Endothelial cell of umbilical vein (primary cell): ENCODE measurements at regions of chr10 and their contacts with region 1.

Region 1: GRCh38 chr10:80382989-80383388 is 25.4 kb upstream of the PRXL2A start:
- DNase-seq: peak; percentile 70
- H3K4me3 ChIP-seq: no peak overlapping the region
- H3K27ac ChIP-seq: no peak overlapping the region
- H3K4me1 ChIP-seq: no peaks in the 10 kb centered on the region
- H3K27me3 ChIP-seq: no peaks in the 10 kb centered on the region
- CTCF ChIP-seq: peak; percentile 58 to 63
- POLR2A ChIP-seq: no peak

Region 2: DNA sequence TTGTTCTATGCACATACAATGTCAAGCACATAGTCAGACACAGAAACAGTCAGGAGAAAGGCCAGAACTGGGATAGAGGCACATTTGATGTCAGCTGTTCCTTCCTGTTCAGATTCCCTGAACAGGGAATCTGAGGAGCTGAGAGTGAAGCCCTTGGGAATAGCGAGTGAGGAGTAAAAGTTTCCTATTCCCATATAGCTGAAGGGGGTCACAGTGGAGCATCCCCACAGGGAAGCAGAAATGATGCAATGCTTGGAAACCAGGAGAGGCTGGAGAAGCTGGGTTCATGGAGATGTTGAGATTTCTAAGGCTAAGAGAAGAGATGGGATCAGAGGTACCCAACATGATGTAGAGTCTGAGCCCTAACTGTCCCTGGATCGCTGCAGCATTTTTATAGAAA is 14.0 kb after region 1 on chr10:
- CTCF ChIA-PET with region 1: interaction called, 10 read pairs
- POLR2A ChIA-PET with region 1: no interaction called
- dilution Hi-C with region 1: no loop called
- intact Hi-C with region 1: no loop called
- DNase-seq: no peak
- H3K4me3 ChIP-seq: no peak overlapping the region
- H3K27ac ChIP-seq: no peak overlapping the region
- H3K4me1 ChIP-seq: no peaks in the 10 kb centered on the region
- H3K27me3 ChIP-seq: peaks cover 5 to 7% of the 10 kb centered on the region in 2 experiments
- CTCF ChIP-seq: no peak
- POLR2A ChIP-seq: no peak

Region 3: DNA sequence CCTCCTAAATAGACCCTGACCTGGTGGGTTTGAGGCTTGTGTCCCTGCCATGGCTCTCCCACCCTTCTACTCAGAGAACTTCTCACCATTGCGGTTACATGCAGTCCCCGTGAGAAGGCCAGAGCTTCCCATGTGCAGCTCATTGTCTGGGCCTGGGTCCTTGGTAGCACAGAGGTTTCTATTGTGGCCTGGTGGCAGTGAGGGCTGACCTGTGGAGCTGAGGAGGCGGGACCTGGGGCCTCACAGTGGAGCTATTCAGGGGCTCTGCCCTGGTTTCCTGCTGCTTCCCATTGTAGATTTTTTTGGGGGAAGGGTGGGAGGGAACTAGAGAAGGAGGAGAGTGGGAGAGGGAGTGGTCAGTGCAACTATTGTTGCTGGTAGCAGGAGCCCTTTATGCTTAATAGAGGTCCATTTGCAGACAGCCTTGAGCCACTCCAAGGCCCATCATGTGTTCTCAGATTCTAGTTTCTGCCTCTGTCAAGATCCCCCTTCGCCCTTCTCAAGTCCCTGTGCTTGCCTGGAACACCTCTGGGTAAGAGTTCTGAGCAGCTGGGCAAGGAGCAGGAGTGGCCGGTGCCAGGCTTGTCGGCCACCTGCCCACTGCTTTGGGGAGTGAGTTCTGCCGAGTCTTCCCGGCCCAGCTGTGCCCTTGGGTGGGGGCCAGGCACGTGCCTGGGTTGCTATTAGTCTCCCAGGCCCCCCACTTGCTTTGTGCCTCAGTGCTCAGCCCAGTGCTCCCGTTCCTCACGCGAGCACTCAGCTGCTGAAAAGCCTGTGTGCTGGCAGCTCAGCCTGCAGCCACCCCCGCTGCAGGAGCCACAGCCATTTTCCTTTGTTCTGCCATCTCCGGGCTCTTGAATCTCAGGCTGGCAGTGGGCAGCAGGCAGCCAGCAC is 81.8 kb after region 1 on chr10:
- CTCF ChIA-PET with region 1: no interaction called
- POLR2A ChIA-PET with region 1: no interaction called
- dilution Hi-C with region 1: no loop called
- intact Hi-C with region 1: no loop called
- DNase-seq: peak; percentile 78
- H3K4me3 ChIP-seq: peak overlapping the region in 2 of 3 experiments; percentile 13 to 23
- H3K27ac ChIP-seq: peak overlapping the region; percentile 79
- H3K4me1 ChIP-seq: peaks cover 97% of the 10 kb centered on the region
- H3K27me3 ChIP-seq: no peaks in the 10 kb centered on the region
- CTCF ChIP-seq: no peak
- POLR2A ChIP-seq: peak; percentile 37

Region 4: DNA sequence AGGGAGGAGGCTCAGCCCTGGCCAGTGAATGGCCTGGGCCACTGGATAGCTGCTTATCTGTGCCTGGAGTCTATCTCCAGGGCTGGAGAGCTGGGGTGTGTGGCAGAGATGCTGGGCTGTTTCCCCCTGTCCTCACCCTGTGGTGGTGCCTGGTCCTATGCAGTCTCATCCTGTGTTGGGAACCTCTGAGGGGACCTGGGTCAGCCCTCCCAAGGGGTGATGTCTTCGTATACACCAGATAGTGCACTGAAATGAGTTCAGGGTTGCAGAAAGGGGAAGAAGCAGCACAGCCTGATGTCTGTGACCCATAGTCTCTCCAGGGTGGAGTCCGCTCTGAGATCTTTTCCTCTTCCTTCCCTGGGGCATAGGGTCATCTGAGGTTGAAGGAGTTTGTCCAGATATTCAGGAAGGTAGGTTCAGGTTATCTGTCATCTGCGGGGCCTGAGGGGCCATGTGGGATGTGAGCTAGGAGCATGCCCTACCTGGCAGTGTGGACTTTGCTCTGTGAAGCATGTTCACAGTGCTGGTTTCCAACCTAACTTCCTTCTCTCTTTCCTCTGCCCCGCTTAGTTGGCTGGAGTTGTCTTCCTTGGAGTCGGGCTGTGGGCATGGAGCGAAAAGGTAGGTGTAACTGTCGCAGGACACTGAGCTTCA is 121.3 kb after region 1 on chr10:
- CTCF ChIA-PET with region 1: interaction called, 29 read pairs
- POLR2A ChIA-PET with region 1: interaction called, 3 read pairs
- dilution Hi-C with region 1: no loop called
- intact Hi-C with region 1: loop called (anchors 1 kb)
- DNase-seq: no peak
- H3K4me3 ChIP-seq: no peak overlapping the region
- H3K27ac ChIP-seq: peak overlapping the region; percentile 96
- H3K4me1 ChIP-seq: peaks cover 94% of the 10 kb centered on the region
- H3K27me3 ChIP-seq: no peaks in the 10 kb centered on the region
- CTCF ChIP-seq: no peak
- POLR2A ChIP-seq: no peak

Region 5: DNA sequence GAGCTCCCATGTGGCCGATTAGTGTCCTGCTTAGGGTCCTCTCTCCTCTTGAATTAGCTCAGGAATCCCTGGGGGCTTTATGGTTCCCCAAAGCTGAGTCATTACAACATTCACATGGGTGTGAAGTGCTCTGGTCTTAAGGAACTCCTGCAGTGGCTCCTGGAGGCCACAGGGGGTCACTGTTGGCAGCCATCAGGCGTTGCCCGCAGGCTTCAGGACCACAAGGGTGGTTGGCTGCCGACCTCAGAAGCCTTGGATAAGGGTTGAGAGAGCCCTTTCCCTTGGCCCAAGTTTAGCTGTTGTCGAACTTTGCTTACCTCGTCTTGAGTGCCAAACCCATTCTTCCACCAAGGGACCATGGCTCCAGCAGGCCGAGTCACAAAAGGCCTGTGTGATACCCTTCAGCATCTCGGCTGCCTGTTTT is 216.4 kb after region 1 on chr10:
- CTCF ChIA-PET with region 1: interaction called, 11 read pairs
- POLR2A ChIA-PET with region 1: interaction called, 3 read pairs
- dilution Hi-C with region 1: no loop called
- intact Hi-C with region 1: loop called (anchors 1 kb)
- DNase-seq: peak; percentile 62
- H3K4me3 ChIP-seq: no peak overlapping the region
- H3K27ac ChIP-seq: no peak overlapping the region
- H3K4me1 ChIP-seq: no peaks in the 10 kb centered on the region
- H3K27me3 ChIP-seq: no peaks in the 10 kb centered on the region
- CTCF ChIP-seq: peak; percentile 73 to 86
- POLR2A ChIP-seq: no peak

Region 6: DNA sequence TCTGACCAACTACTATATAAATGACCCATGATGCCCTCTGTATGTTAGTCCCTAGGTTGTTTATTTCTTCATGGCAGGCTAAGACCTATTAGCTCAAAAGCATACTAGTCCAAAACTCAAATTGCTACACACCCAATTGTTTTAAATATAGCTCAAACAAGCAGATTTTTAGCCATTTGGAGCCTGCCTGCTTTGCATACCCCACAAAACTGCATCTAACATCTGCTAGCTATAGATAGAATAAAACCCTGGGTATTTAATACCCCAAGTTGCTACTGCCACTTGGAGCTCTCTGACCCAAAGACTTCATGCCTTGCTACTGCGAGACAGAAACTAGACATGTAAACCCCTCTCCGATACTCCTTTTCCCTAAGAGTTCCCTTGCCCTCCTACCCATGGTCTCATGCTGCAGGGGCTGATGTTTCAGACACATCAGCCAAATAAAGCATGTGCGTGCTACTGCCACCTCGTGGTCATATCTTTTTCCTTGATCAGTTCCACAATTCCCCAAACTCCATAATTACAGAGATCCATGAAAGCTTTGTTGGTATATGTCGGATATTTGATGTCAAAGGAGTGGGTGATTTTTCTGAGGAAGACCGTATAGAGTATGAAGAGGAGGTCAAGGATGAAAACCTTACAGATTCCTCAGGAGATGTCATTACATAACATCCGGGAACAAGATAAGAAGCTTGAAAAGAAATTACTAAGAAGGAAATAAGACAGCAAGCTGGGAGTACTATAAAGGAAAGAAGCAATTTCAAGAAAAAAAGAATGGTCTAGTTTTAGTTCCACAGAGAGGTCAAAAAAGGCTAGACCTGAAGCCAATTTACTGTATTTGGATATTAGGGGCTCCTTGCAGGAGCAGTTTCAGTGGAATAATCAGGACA is 541.3 kb after region 1 on chr10:
- CTCF ChIA-PET with region 1: interaction called, 39 read pairs
- POLR2A ChIA-PET with region 1: no interaction called
- dilution Hi-C with region 1: no loop called
- intact Hi-C with region 1: loop called (anchors 1 kb)
- DNase-seq: peak; percentile 56
- H3K4me3 ChIP-seq: no peak overlapping the region
- H3K27ac ChIP-seq: no peak overlapping the region
- H3K4me1 ChIP-seq: no peaks in the 10 kb centered on the region
- H3K27me3 ChIP-seq: peaks cover 0 to 4% of the 10 kb centered on the region in 2 experiments
- CTCF ChIP-seq: peak; percentile 46 to 63
- POLR2A ChIP-seq: no peak